GM10248 (cell line): ENCODE measurements at regions of chr20 and their contacts with region 1.

Region 1: GRCh38 chr20:5126512-5127203 is at the start of gene CDS2:
- DNase-seq: peak; percentile 98
- CTCF ChIP-seq: peak; percentile 78

Region 2: GRCh38 chr20:5141615-5142014 is 15.0 kb after region 1 on chr20:
- CTCF ChIA-PET with region 1: interaction called, 23 read pairs
- POLR2A ChIA-PET with region 1: interaction called, 6 read pairs
- DNase-seq: no peak
- CTCF ChIP-seq: no peak

Region 3: DNA sequence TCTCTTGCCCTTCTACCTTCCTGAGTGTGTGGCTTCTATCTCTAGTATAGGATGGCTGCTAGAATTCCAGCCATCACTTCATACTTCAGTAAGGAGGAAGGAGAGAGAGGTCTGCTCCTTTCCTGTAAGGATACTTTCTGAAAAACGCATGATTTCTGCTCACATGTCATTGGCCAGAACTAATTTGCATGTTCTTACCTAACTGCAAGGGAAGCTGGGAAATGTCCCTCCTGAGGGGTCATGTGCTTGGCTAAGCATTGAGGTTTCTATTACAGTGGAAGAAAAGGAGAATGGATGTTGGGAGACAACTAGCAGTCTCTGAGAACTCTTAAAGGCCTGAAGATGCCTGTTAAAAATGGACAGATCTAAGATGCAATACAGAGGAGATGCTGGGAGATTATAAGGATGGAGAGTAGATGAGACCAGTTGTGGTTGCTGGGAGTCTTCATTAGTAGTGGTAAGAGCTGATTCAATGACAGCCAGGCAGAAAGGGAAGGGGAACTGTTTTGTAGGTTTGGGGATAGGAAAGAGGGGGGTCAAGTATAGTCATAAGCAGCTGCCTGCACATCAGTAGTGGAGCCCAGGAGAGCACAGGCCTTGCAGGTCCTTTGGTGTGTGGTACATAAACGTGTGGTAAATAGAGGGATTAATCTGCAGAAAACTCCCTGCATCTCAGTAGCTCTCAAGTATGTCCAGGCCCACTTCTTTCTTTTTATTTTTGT is 20.4 kb after region 1 on chr20:
- CTCF ChIA-PET with region 1: interaction called, 23 read pairs
- POLR2A ChIA-PET with region 1: interaction called, 6 read pairs
- DNase-seq: no peak
- CTCF ChIP-seq: no peak

Region 4: GRCh38 chr20:5168651-5169396 is 42.2 kb after region 1 on chr20:
- CTCF ChIA-PET with region 1: interaction called, 31 read pairs
- POLR2A ChIA-PET with region 1: interaction called, 5 read pairs
- DNase-seq: no peak
- CTCF ChIP-seq: no peak

Region 5: DNA sequence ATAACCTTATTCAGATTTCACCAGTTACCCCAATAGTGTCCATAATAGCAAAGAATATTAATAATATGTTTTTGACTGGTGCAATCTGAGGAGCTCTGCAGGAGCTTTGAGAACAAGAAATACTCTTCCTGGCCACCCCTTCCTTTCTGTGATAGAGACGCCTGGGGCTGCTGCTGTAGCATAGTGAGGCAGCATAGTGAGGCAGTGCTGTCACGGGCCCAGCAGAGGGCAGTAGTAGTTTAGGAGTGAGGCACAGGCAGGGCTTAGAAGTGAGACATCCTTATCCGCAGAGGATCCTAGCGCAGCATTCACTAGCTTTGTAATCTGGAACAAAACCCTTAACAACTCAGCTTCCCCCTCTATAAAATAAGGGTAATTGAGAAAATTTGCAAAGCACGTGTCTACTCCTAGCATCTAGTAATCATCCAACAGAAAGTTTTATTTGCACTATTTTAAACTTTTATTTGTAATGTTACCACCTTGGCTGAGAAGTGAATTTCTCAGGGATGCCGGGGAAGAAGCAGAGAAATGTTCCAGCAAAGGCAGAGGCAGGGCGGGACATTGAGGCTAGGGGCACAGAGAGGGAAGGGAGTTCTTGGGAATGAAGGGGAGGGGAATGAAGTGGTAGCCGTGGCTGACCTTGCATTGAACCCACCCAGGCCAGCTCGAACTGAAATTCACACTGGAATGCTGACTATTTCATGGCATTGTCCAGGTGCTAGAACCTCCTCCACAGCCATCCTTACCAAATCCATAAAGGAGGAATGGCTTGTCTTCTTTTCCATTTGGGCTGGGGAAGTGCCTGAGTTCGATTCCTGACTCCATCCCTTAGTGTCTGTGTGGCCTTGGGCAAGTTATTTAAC is 78.9 kb after region 1 on chr20:
- CTCF ChIA-PET with region 1: interaction called, 12 read pairs
- POLR2A ChIA-PET with region 1: no interaction called
- DNase-seq: peak; percentile 83
- CTCF ChIP-seq: peak; percentile 94

Region 6: DNA sequence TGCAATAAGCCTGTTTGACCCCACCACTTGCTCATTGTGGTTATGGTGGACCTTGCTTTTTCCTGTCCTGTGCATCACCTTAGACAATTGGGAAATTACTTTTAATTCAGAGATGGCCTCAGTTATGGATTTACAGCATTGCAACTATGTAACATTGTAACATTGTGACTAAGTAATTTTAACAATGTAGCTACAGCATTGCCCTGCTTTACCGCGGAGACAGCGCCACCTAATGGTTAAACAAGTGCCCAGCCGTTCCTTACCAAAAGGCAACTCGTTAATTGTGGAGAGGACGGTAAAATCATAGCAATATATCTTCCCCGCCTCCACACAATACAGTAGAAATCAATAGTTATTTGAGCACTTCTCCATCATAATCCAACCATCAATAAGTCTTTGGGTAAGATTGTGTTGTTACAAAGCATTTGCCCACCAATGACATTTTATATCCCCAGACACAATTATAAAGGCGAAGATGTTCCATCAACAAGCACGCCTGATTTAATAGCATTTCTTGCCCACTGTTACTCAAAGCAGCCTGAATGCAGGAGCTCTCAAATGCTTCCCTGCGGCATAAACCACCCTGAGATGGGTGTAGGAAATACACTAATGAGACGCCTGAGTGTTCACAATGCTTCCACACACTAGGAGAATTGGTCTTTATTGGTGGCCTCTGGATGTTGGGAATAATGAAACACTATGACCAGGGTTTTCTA is 96.4 kb after region 1 on chr20:
- CTCF ChIA-PET with region 1: interaction called, 26 read pairs
- POLR2A ChIA-PET with region 1: no interaction called
- DNase-seq: peak; percentile 72
- CTCF ChIP-seq: peak; percentile 95